GM18951 (cell line): ENCODE measurements at regions of chr1 and their contacts with region 1.

Region 1: DNA sequence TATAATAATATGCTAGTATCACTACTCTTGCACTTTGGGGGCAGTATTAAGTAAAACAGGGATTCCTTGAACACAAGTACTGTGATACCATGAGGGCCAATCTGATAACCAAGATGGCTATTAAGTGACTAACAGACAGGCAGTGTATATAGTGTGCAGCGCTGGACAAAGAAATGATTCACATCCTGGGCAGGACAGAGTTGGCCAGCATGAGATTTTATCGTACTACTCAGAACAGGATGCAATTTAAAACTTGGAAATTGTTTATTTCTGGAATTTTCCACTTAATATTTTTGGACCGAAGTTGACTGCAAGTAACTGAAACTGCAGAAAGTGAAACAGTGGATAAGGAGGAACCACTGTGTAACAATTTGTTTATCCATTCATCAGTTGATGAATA is 74.6 kb downstream of the DNTTIP2 start:
- POLR2A ChIP-seq: no peak

Region 2: GRCh38 chr1:93629099-93630059 is 175.0 kb before region 1 on chr1:
- in situ Hi-C with region 1: loop called (anchors 10 kb)
- POLR2A ChIP-seq: no peak